K562 (cell line): ENCODE measurements at regions of chr5 and their contacts with region 1.

Region 1: DNA sequence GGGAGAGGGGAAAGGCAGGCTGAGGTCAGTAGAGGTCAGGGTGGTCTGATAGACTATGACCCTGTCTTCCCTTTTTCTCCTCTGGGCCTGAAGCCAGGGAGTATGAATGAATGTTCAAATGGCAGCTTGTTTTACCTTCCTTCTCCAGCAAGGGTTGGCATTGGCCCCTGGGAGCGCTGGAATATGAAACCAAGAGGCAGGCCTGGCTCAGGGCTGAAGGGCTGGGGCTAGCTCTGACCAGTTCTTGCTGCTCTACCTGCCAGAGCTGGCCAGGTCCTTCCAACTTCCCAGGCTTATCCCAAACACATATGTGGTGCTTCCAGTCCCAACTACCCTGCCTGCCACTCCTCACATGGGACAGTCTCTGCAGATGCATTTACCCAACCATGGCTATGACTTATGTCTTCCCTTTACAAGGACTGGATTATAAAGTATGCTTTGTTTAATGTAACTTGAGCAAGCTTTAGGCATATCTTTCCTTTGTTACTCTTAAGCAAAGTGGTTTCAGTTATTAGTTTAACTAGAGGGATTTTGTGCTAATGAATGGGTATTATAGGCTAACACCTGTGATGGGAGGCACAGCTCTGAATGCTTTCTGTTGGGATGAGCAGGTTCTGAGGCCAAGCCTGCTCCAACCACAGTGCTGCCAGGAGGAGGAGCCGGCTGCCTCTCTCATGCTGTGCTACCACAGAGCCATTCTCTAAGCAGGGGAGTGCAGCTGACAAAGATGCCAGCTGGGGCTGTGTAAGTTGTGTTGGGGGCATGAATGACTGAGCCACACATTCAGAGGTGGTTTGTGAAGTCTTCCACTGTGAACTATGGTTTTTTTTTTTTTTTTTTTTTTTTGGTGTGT is 6.1 kb downstream of the CCNI2 start:
- DNase-seq: no peak
- ATAC-seq: peak; percentile 71
- H3K4me3 ChIP-seq: no peak overlapping the region
- H3K27ac ChIP-seq: no peak overlapping the region
- H3K4me1 ChIP-seq: no peaks in the 10 kb centered on the region; a peak in 1 of 5 replicates
- H3K27me3 ChIP-seq: no peaks in the 10 kb centered on the region
- CTCF ChIP-seq: peak; percentile 25 to 43 (median 40); a peak in 2 of 6 replicates
- EP300 ChIP-seq: no peak
- POLR2A ChIP-seq: no peak
- RAD21 ChIP-seq: peak in 1 of 2 experiments; percentile 28; a peak in 1 of 4 replicates

Region 2: DNA sequence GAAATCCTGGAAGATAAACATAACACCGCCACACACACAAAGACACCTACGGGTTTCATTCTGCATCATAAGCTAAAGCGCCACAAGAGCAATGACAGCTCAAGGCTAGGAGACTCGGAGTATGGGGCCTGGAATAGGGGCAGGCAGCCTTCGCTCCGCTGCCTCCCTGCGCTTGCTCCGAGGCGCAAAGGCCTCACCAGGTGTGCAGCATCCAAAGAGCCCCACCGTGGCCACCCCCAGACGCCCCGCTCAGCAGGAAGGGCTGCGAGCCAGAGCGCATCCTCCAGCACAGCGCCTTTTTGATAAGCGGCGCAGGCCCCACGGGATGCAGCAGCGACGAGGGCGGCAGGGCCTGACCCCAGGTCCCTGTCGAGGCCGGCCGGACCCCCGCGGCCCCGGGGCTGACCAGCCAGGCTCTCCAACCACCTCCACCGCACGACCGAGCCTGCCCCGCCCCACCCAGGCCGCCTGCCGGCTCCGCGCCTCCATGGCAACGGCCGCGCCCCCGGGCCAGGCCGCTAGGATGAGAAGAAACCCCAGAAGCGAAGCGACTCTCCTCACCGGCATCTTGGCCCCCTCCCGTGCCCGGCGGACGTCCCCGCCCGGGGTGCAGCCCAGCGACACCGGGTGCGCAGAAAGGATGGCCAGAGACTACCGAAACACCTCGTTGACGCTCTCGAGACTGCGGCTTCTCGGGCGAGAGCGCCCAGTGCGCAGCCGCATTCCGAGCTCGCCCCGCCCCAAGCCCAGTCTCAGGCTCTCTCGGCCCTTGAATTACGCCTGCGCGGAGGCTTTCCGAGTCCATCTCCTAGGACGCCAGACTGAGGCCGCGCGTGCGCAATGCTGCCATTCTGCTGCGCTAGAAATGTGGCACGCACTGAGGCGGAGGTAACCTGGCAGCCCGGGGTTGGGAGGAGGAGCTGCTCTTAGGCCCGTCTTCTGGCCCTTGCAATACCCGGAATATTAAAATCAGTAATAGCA is 16.2 kb before region 1 on chr5 and contains the start of gene KIF3A:
- CTCF ChIA-PET with region 1: no interaction called
- POLR2A ChIA-PET with region 1: interaction called, 20 read pairs
- in situ Hi-C with region 1: no loop called
- intact Hi-C with region 1: no loop called
- DNase-seq: peak; percentile 98 to 100 (median 99)
- ATAC-seq: peak; percentile 99
- H3K4me3 ChIP-seq: peak within 1 kb of the TSS; percentile 84
- H3K27ac ChIP-seq: no peak within 1 kb of the TSS; the same call in 2 of the 3 replicates
- H3K4me1 ChIP-seq: peaks cover 10 to 16% of the 10 kb centered on the region in 2 experiments; a peak in 4 of 5 replicates
- H3K27me3 ChIP-seq: no peaks in the 10 kb centered on the region
- CTCF ChIP-seq: no peak
- EP300 ChIP-seq: no peak
- POLR2A ChIP-seq: peak; percentile 52; the same call in 1 of the 2 replicates
- RAD21 ChIP-seq: no peak
- polyA plus RNA-seq, gene KIF3A: 1.5 TPM

Region 3: DNA sequence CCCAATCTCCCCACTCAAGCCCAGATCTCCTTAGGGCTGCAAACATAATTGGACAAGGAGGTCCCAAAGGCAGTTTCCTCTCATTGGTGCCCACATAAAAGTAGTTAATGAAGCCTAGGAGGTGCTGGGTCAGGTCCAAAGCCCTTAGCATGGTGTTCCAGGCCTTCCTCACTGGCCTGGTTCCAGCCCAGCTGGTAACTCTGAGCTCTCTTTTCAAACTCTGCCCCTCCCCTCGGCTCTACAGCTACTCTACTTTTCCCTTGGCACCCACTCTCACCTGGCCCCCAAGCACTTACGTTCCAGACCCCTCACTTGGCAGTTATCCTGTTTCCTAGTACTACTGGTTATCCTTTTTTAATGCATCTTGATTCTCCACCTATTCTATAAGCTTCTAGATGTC is 13.8 kb after region 1 on chr5:
- CTCF ChIA-PET with region 1: no interaction called
- POLR2A ChIA-PET with region 1: interaction called, 22 read pairs
- in situ Hi-C with region 1: no loop called
- intact Hi-C with region 1: no loop called
- DNase-seq: no peak
- ATAC-seq: no peak
- H3K4me3 ChIP-seq: no peak overlapping the region
- H3K27ac ChIP-seq: no peak overlapping the region
- H3K4me1 ChIP-seq: peaks cover 7 to 14% of the 10 kb centered on the region in 2 experiments; a peak in 3 of 5 replicates
- H3K27me3 ChIP-seq: no peaks in the 10 kb centered on the region
- CTCF ChIP-seq: no peak
- EP300 ChIP-seq: no peak
- POLR2A ChIP-seq: no peak
- RAD21 ChIP-seq: no peak

Region 4: DNA sequence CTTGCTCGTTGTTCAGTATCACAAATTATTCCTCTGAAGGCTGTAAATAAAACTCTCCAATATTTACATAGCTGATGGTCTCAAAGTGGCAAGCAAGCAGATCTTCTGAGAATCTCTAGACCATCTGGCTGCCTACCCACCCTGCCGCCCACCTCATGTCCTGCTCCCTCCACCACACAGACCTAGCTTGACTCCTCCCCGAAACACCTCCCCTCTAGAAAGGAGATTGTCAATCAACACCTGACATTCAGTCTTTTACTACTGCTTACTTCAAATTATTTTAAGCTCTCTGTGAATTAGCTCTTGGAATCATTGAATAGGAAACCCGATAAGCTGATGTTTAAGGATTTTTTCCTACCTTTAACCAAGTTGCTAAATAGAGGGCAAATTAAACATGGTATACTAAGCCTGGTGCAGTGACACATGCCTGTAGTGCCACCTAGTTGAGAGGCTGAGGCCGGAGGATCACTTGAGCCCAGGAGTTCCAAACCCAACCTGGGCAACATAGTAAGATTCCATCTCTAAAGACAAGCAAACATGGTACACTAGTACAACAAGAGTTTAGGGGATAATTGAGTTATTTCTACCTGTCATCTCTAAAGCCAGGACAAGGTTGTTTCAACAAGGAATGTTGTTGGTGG is 48.8 kb after region 1 on chr5:
- CTCF ChIA-PET with region 1: no interaction called
- POLR2A ChIA-PET with region 1: interaction called, 3 read pairs
- in situ Hi-C with region 1: no loop called
- intact Hi-C with region 1: loop called (anchors 5 kb)
- DNase-seq: no peak
- ATAC-seq: peak; percentile 73
- H3K4me3 ChIP-seq: no peak overlapping the region
- H3K27ac ChIP-seq: no peak overlapping the region
- H3K4me1 ChIP-seq: peaks cover 2 to 4% of the 10 kb centered on the region in 2 experiments; a peak in 3 of 5 replicates
- H3K27me3 ChIP-seq: no peaks in the 10 kb centered on the region
- CTCF ChIP-seq: peak; percentile 15 to 35 (median 28); a peak in 3 of 6 replicates
- EP300 ChIP-seq: no peak
- POLR2A ChIP-seq: no peak
- RAD21 ChIP-seq: peak; percentile 31 to 65; a peak in 3 of 4 replicates

Region 5: DNA sequence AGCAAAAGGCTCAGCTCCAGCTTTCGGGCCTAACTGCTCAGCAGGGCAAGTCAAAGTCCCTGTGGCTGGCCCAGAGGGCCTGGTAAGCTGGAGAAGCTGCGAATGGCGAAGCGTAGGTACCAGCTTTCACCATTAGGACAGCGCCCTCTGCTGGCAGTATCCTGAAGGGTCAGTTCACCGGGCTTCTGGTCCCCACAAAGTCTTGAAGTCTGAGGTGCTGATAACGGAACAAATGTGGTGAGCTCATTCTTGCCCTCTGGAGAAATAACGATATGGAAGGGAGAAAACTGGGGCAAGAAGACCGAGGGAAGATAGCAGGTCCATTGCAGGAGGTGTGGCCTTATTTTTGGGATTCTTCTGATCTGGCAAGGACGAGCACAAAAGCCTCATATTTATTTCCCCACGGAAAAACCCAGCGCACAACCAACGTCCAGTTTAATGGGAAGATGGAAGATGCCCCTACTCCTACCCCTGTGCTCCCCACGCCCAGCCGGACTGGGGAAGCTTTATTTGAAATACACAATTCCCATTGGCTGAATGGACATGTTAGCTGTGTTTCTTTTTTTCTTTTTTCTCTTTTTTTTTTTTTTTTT is 66.9 kb after region 1 on chr5:
- CTCF ChIA-PET with region 1: interaction called, 19 read pairs
- POLR2A ChIA-PET with region 1: interaction called, 5 read pairs
- in situ Hi-C with region 1: loop called (anchors 5 kb)
- intact Hi-C with region 1: loop called (anchors 1 kb)
- DNase-seq: peak; percentile 84 to 97 (median 88)
- ATAC-seq: peak; percentile 96
- H3K4me3 ChIP-seq: no peak overlapping the region
- H3K27ac ChIP-seq: no peak overlapping the region
- H3K4me1 ChIP-seq: peaks cover 2 to 19% of the 10 kb centered on the region in 2 experiments; a peak in 3 of 5 replicates
- H3K27me3 ChIP-seq: no peaks in the 10 kb centered on the region
- CTCF ChIP-seq: peak; percentile 90 to 98 (median 96)
- EP300 ChIP-seq: peak; percentile 11; the same call in 1 of the 2 replicates
- POLR2A ChIP-seq: no peak
- RAD21 ChIP-seq: peak; percentile 98 to 99

Region 6: DNA sequence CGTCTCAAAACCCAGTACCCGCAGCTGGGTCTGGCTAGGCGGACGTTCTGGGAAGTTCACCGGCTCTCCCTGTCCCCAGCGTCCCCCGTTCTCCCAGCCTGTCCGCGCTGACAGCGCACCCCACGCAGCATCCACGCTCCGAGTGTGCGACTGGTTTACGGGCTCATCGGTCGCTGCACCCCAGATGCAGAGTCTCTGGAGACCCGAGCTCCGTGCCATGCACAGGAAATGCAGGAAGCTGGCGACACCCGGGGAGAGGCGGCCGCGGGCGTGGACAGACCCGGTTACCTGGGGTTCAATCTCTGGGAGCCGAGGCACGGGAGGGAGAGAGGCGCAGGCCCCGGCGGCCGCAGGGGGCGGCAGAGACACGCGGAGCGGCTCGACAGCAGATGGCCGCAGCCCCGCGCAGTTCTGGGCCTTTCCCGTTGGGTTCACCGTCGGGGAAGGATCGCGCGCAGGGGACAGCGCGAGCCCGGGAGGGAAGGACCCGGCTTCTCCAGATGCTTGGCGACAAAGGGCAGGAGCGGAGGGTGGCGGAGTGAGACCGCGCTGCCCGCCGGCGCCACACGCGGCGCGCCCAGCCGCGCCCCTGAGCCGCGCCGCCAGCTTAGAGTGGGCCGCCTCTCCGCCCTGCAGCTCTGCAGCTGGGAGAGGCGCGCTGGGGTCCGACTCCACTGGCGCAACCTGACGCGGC is 76.5 kb after region 1 on chr5:
- CTCF ChIA-PET with region 1: no interaction called
- POLR2A ChIA-PET with region 1: no interaction called
- in situ Hi-C with region 1: loop called (anchors 5 kb)
- intact Hi-C with region 1: no loop called
- DNase-seq: peak; percentile 79 to 89 (median 85)
- ATAC-seq: peak; percentile 89
- H3K4me3 ChIP-seq: peak overlapping the region; percentile 74
- H3K27ac ChIP-seq: peak overlapping the region; percentile 92
- H3K4me1 ChIP-seq: peaks cover 18 to 29% of the 10 kb centered on the region in 2 experiments; a peak in 4 of 5 replicates
- H3K27me3 ChIP-seq: no peaks in the 10 kb centered on the region
- CTCF ChIP-seq: peak; percentile 85 to 93 (median 93)
- EP300 ChIP-seq: no peak
- POLR2A ChIP-seq: no peak
- RAD21 ChIP-seq: peak; percentile 86 to 88

Region 7: GRCh38 chr5:132883261-132883834 is 130.0 kb after region 1 on chr5:
- CTCF ChIA-PET with region 1: interaction called, 3 read pairs
- POLR2A ChIA-PET with region 1: no interaction called
- in situ Hi-C with region 1: no loop called
- intact Hi-C with region 1: loop called (anchors 5 kb)
- DNase-seq: peak; percentile 45 to 79 (median 56)
- ATAC-seq: peak; percentile 99
- H3K4me3 ChIP-seq: no peak overlapping the region
- H3K27ac ChIP-seq: no peak overlapping the region
- H3K4me1 ChIP-seq: no peaks in the 10 kb centered on the region
- H3K27me3 ChIP-seq: no peaks in the 10 kb centered on the region
- CTCF ChIP-seq: peak; percentile 74 to 83 (median 77)
- EP300 ChIP-seq: no peak
- POLR2A ChIP-seq: no peak
- RAD21 ChIP-seq: peak; percentile 83 to 88